Left cardiac atrium (tissue), 4 donors: ENCODE measurements at regions of chr13 and their contacts with region 1.

Region 1: GRCh38 chr13:109862627-109863026 is 76.2 kb upstream of the IRS2 start:
- DNase-seq: no peak
- ATAC-seq: no peak

Region 2: DNA sequence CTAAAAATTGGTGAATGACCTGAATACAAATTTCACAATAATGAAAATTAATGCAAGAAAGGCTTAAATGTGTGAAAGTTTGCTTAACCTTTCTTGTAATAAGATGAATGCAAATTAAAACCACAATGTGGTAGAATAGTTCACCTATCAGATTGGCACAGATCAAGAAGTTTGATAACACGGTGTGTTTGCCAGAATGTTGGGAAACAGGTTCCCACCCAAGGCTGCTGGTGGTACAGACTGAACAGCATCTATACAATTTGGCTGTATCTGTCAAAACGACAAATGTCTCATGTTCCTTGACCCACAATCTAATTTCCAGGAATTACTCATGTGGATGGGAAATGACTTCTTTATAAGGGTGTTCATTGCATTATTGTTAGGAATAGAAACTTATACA is 67.6 kb before region 1 on chr13:
- intact Hi-C with region 1: loop called in 1 of 2 experiments (anchors 5 kb)
- DNase-seq: no peak
- ATAC-seq: no peak

Region 3: DNA sequence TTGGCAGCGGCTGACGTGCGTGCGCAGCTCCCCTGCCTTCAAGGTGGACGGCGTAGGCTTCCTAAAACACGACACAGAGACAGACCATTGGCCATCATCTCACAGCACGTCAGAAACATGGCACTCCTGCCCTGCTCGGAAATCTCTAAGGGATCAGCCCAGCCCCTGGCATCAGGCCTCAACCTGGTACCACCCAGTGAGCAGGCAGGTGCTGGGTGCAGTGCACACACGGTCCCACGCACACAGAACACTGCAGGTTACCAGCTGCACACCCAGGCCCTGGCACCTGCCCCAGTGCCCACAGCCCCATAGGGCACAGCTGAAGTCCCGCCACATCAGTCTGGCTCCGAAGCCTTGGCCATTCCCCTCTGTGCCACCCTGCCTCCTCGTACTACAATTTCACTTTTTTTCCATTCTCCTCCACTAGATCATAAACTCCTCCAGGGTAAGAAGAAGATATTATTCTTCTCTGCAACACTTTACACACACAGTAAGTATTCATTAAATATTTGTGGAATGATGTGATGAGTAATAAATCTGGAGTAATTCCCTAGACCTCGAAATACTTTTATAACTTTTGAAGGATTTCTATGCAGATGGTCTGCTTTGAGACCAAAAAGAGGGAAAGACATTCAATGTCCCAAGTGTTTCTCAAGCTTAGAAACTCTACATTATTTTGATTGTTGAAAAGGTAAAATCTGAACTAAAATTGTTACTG is 287.9 kb after region 1 on chr13:
- intact Hi-C with region 1: no loop called
- DNase-seq: no peak
- ATAC-seq: no peak